ENCODE measurements at regions of chr1 and their contacts with region 1.

Region 1: DNA sequence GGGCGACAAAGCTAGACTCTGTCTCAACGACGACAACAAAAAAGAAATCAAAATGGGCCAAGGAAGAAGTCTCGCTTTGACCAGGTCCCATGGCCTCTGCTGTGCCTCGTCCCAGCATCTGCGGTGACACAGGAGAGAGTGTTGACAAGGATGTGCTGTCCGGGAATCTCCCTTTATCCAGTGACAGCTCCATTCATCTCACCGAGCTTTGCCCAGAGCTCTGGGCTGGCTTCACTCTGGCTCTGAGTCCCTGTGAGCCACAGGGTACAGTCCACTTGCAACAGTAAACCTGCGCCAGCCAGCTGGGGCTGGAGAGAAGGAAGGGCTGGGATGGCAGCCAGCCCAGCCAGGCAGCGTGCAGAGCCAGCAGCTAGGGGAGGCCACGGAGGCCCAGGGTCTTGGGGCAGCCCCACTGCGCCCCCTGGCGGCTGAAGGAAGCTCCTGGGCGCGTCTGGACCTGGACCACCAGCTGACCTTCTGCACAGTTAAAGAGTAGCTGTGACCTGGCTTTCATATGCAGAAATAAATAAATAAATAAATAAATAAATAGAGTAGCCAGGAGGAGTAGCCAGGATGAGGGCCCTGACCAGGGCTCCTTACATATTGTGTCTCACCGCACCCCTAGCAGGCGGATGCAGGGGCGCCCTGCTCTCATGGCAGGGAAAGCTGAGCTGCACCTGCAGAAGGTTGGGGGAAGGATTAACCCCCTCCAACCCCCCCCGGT is 29.7 kb downstream of the ENO1 start:
- DNase-seq: peak; percentile 92
- H3K4me3 ChIP-seq: no peak overlapping the region
- H3K27ac ChIP-seq: no peak overlapping the region
- H3K4me1 ChIP-seq: peaks cover 8% of the 10 kb centered on the region
- H3K27me3 ChIP-seq: no peaks in the 10 kb centered on the region
- CTCF ChIP-seq: peak; percentile 90

Region 2: DNA sequence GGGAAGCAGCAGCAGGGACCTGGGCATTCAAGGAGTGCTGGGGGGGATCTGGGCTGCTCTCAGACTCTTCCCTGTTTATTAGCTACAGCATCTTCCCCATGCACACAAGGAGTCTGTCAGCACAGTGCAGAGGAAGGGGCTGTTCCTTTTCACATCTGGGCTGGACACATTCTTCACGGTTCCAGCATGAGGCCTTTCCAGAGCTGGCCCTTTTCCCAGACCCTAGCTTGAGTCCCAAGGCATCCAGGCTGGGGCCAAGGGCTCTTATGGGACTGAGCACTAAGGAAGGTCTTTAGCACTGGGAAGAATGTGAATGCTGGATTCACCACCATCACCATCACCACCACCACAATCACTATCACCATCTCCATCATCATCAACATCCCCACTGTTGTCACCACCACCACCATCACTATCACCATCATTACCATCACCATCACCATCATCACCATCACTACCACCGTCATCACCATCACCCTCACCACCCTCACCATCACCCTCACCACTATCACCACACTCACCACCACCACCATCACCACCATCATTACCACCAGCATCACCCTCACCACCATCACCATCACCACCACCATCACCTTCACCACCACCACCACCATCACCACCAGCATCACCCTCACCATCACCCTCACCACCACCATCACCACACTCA is 858.9 kb before region 1 on chr1:
- CTCF ChIA-PET with region 1: no interaction called
- POLR2A ChIA-PET with region 1: no interaction called
- intact Hi-C with region 1: loop called (anchors 10 kb)
- DNase-seq: no peak
- H3K4me3 ChIP-seq: no peak overlapping the region
- H3K27ac ChIP-seq: no peak overlapping the region
- H3K4me1 ChIP-seq: no peaks in the 10 kb centered on the region
- H3K27me3 ChIP-seq: no peaks in the 10 kb centered on the region
- CTCF ChIP-seq: no peak

Region 3: GRCh38 chr1:8396786-8397406 is 451.9 kb before region 1 on chr1:
- CTCF ChIA-PET with region 1: no interaction called
- POLR2A ChIA-PET with region 1: no interaction called
- intact Hi-C with region 1: no loop called
- DNase-seq: peak; percentile 77
- H3K4me3 ChIP-seq: peak overlapping the region; percentile 18
- H3K27ac ChIP-seq: peak overlapping the region; percentile 80
- H3K4me1 ChIP-seq: peaks cover 53% of the 10 kb centered on the region
- H3K27me3 ChIP-seq: no peaks in the 10 kb centered on the region
- CTCF ChIP-seq: no peak

Region 4: GRCh38 chr1:8712413-8713231 is 136.2 kb before region 1 on chr1:
- CTCF ChIA-PET with region 1: interaction called, 9 read pairs
- POLR2A ChIA-PET with region 1: no interaction called
- intact Hi-C with region 1: loop called (anchors 5 kb)
- DNase-seq: peak; percentile 91
- H3K4me3 ChIP-seq: peak overlapping the region; percentile 11
- H3K27ac ChIP-seq: peak overlapping the region; percentile 81
- H3K4me1 ChIP-seq: peaks cover 49% of the 10 kb centered on the region
- H3K27me3 ChIP-seq: no peaks in the 10 kb centered on the region
- CTCF ChIP-seq: no peak

Region 5: DNA sequence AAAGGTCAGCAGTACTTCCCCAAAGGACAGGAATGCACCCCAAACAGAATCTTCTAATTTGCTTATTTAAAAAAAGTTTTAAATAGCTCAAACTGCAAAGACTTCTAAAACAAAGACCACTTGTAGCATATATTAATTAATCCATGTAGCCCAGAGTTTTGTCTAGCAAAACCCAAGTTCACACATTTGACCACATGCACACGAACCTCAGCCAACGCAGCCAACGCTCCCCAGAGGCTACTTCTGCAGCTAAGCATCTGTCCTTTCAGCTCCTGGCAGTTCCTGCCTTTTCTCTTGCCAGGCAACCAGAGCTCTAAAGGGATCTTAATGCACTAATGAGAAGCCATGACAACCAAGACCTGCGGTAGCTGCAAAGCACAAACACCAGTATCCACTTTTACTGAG is 121.0 kb before region 1 on chr1:
- CTCF ChIA-PET with region 1: interaction called, 11 read pairs
- POLR2A ChIA-PET with region 1: no interaction called
- intact Hi-C with region 1: no loop called
- DNase-seq: peak; percentile 27
- H3K4me3 ChIP-seq: no peak overlapping the region
- H3K27ac ChIP-seq: peak overlapping the region; percentile 55
- H3K4me1 ChIP-seq: peaks cover 38% of the 10 kb centered on the region
- H3K27me3 ChIP-seq: no peaks in the 10 kb centered on the region
- CTCF ChIP-seq: no peak